Psoas muscle (tissue), 8 donors: ENCODE measurements at regions of chr1 and their contacts with region 1.

Region 1: GRCh38 chr1:53220171-53220961 is at the start of gene CZIB:
- DNase-seq: peak; percentile 97 to 98
- ATAC-seq: peak; percentile 98 to 99 (median 98)
- H3K4me3 ChIP-seq: peak within 1 kb of the TSS; percentile 90
- H3K27ac ChIP-seq: peak within 1 kb of the TSS; percentile 98
- H3K4me1 ChIP-seq: peaks cover 14% of the 10 kb centered on the region
- H3K27me3 ChIP-seq: no peaks in the 10 kb centered on the region
- CTCF ChIP-seq: no peak
- total RNA-seq, gene CZIB: 50.0 to 57.3 (median 54.2) TPM

Region 2: DNA sequence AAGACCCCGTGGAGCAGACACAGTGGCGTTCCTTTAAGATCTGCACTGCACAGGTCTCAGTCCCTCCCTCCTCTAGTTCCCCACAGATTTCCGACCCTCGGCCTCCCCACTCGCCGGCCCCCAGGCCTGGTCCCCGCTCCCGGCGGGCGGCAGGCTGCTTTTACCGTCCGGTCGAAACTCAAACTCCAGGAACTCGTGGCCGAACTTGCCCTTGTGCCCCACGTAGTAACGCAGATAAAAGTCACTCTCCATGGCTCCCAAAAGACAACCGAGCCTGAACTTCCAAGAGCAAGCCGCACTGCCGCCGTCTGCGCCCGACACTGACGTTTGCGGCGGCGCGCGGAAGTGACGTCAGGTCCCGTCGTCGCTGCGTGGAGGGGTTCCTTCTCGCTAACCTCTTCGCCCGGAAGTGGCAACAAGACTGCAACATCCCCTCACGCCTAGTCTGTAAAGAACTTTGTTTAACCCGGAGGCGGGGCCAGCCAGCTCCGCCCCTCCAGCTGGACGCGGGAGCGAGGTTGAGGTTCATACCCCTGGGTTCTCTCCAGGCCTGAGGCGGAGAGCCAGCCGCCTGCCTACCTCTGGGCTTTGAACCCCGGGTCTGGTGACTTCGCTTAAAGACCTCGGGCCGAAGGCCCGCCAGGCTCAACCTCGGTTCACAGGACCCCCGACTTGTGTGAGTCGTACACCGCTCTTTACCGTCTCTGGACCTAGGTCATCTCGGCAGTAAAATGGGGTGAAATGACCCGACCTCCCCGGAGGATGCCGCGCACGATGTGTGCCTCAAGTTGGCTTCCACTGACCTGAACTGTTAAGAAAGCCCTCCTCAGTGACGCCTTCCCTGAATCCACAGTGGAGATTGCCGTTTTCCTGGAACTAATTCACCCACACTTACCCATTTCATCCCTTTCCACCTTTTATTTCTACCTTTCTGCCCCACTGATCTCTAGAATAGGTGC is 18.1 kb after region 1 on chr1 and contains the start of gene MAGOH:
- intact Hi-C with region 1: loop called (anchors 2 kb)
- DNase-seq: peak; percentile 93 to 96
- ATAC-seq: peak; percentile 97 to 99 (median 98)
- H3K4me3 ChIP-seq: peak within 1 kb of the TSS; percentile 90
- H3K27ac ChIP-seq: peak within 1 kb of the TSS; percentile 83
- H3K4me1 ChIP-seq: peaks cover 23% of the 10 kb centered on the region
- H3K27me3 ChIP-seq: peaks cover 0 to 6% (median 0%) of the 10 kb centered on the region in 3 donors
- CTCF ChIP-seq: no peak
- total RNA-seq, gene MAGOH: 15.9 to 33.6 (median 26.4) TPM

Region 3: DNA sequence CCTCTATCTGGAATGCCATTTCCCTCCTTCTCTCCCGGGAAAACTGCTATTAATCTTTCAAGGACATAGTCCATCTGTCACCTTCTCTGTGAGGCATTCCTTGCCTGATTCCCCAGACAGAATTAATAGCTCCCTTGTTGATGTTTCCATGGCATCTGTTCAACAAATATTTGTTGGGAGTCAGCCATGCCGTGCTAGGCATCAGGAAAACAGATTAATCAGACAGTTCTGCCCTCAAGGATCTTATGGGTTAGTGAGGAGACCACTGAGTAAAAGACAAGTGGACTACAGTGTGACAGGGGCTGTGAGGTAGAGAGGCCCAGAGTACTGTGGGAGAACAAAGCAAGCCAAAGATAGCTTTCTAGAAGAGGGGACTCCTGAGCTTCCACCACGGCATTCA is 29.3 kb after region 1 on chr1:
- intact Hi-C with region 1: no loop called
- DNase-seq: no peak
- ATAC-seq: no peak
- H3K4me3 ChIP-seq: no peak overlapping the region
- H3K27ac ChIP-seq: no peak overlapping the region
- H3K4me1 ChIP-seq: no peaks in the 10 kb centered on the region
- H3K27me3 ChIP-seq: peaks cover 0 to 6% (median 0%) of the 10 kb centered on the region in 3 donors
- CTCF ChIP-seq: no peak

Region 4: GRCh38 chr1:53326088-53326597 is 105.8 kb after region 1 on chr1:
- intact Hi-C with region 1: no loop called
- DNase-seq: peak; percentile 88 to 95
- ATAC-seq: peak; percentile 94 to 95 (median 95)
- H3K4me3 ChIP-seq: peak overlapping the region; percentile 74
- H3K27ac ChIP-seq: peak overlapping the region; percentile 81
- H3K4me1 ChIP-seq: peaks cover 9% of the 10 kb centered on the region
- H3K27me3 ChIP-seq: no peaks in the 10 kb centered on the region
- CTCF ChIP-seq: no peak